AG04449 (cell line): ENCODE measurements at regions of chr14 and their contacts with region 1.

Region 1: DNA sequence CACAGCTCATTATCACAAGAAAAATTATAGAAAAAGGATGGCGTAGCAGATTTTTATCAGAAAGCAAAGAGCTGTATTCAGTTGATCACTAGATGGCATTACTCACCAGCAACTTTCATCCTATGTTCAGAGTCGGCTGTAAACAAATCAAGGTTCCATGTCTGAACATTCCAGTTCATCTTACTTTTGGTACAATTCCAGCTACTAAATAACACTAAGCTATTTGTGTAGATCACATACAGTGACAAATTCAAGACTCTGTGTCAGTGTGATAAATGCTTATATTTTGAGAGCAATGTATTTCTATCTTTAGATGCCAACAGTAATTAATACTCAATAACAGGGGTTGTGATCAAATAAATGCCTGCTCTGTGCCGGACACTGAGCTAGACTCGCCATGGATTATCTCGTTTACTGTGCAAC is 30.1 kb downstream of the NRDE2 start:
- DNase-seq: peak; percentile 38
- H3K4me3 ChIP-seq: no peak overlapping the region
- CTCF ChIP-seq: peak; percentile 45

Region 2: GRCh38 chr14:90288651-90289355 is 12.9 kb before region 1 on chr14:
- CTCF ChIA-PET with region 1: interaction called, 48 read pairs
- POLR2A ChIA-PET with region 1: no interaction called
- DNase-seq: no peak
- H3K4me3 ChIP-seq: no peak overlapping the region
- CTCF ChIP-seq: no peak

Region 3: GRCh38 chr14:90319173-90319572 is 17.5 kb after region 1 on chr14:
- CTCF ChIA-PET with region 1: interaction called, 21 read pairs
- POLR2A ChIA-PET with region 1: no interaction called
- DNase-seq: no peak
- H3K4me3 ChIP-seq: no peak overlapping the region
- CTCF ChIP-seq: no peak

Region 4: DNA sequence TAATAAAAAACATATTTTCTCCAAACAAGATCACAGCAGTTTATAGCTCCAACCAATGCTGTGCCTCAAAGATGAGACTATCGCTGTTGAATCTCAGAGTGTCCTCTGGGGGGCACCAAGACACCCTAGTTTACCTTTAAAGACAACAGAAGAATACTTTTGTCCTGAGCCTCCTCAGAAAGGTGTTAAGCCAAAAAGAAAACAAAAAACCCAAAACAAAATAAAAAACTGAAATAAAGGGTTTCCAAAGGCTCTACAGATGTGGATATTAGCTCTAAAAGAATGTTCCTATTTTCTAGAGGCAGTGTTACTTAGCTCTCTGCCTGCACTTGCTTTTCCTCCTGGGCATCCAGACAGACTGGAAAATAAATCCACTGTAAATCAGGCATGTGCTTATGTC is 601.4 kb after region 1 on chr14:
- CTCF ChIA-PET with region 1: interaction called, 14 read pairs
- POLR2A ChIA-PET with region 1: no interaction called
- DNase-seq: peak; percentile 7
- H3K4me3 ChIP-seq: no peak overlapping the region
- CTCF ChIP-seq: peak; percentile 58